K562 (cell line): ENCODE measurements at regions of chr15 and their contacts with region 1.

Region 1: GRCh38 chr15:72147418-72147817 is 29.2 kb downstream of the SENP8 start:
- DNase-seq: no peak
- ATAC-seq: no peak
- H3K4me3 ChIP-seq: no peak overlapping the region
- H3K27ac ChIP-seq: no peak overlapping the region
- H3K4me1 ChIP-seq: no peaks in the 10 kb centered on the region
- H3K27me3 ChIP-seq: peaks cover 0 to 3% of the 10 kb centered on the region in 2 experiments; a peak in 4 of 5 replicates
- CTCF ChIP-seq: no peak
- EP300 ChIP-seq: no peak
- POLR2A ChIP-seq: no peak
- RAD21 ChIP-seq: no peak

Region 2: GRCh38 chr15:71743861-71744382 is 403.5 kb before region 1 on chr15:
- CTCF ChIA-PET with region 1: no interaction called
- POLR2A ChIA-PET with region 1: no interaction called
- in situ Hi-C with region 1: loop called (anchors 5 kb)
- intact Hi-C with region 1: no loop called
- DNase-seq: peak; percentile 45 to 66 (median 56)
- ATAC-seq: peak; percentile 77
- H3K4me3 ChIP-seq: no peak overlapping the region
- H3K27ac ChIP-seq: no peak overlapping the region
- H3K4me1 ChIP-seq: no peaks in the 10 kb centered on the region
- H3K27me3 ChIP-seq: peaks cover 15 to 41% of the 10 kb centered on the region in 2 experiments; a peak in 4 of 5 replicates
- CTCF ChIP-seq: peak; percentile 54 to 74 (median 61); a peak in 5 of 6 replicates
- EP300 ChIP-seq: no peak
- POLR2A ChIP-seq: no peak
- RAD21 ChIP-seq: peak; percentile 29 to 32

Region 3: GRCh38 chr15:71997691-71998090 is 149.7 kb before region 1 on chr15:
- CTCF ChIA-PET with region 1: no interaction called
- POLR2A ChIA-PET with region 1: no interaction called
- in situ Hi-C with region 1: no loop called
- intact Hi-C with region 1: no loop called
- DNase-seq: no peak
- ATAC-seq: no peak
- H3K4me3 ChIP-seq: no peak overlapping the region
- H3K27ac ChIP-seq: no peak overlapping the region
- H3K4me1 ChIP-seq: no peaks in the 10 kb centered on the region
- H3K27me3 ChIP-seq: no peaks in the 10 kb centered on the region
- CTCF ChIP-seq: no peak
- EP300 ChIP-seq: no peak
- POLR2A ChIP-seq: no peak
- RAD21 ChIP-seq: no peak

Region 4: GRCh38 chr15:72199711-72200212 is 52.3 kb after region 1 on chr15:
- CTCF ChIA-PET with region 1: no interaction called
- POLR2A ChIA-PET with region 1: no interaction called
- in situ Hi-C with region 1: no loop called
- intact Hi-C with region 1: no loop called
- DNase-seq: peak; percentile 71 to 75 (median 74)
- ATAC-seq: peak; percentile 90
- H3K4me3 ChIP-seq: no peak overlapping the region
- H3K27ac ChIP-seq: no peak overlapping the region
- H3K4me1 ChIP-seq: peaks cover 5 to 13% of the 10 kb centered on the region in 2 experiments; a peak in 4 of 5 replicates
- H3K27me3 ChIP-seq: no peaks in the 10 kb centered on the region
- CTCF ChIP-seq: peak; percentile 84 to 86 (median 85)
- EP300 ChIP-seq: no peak
- POLR2A ChIP-seq: no peak
- RAD21 ChIP-seq: peak; percentile 57 to 90

Region 5: GRCh38 chr15:72235298-72235697 is 87.9 kb after region 1 on chr15:
- CTCF ChIA-PET with region 1: no interaction called
- POLR2A ChIA-PET with region 1: no interaction called
- in situ Hi-C with region 1: no loop called
- intact Hi-C with region 1: no loop called
- DNase-seq: peak in 1 of 4 experiments; percentile 38
- ATAC-seq: no peak
- H3K4me3 ChIP-seq: no peak overlapping the region
- H3K27ac ChIP-seq: no peak overlapping the region; the same call in 2 of the 3 replicates
- H3K4me1 ChIP-seq: peaks cover 39 to 42% of the 10 kb centered on the region in 2 experiments
- H3K27me3 ChIP-seq: no peaks in the 10 kb centered on the region
- CTCF ChIP-seq: no peak
- EP300 ChIP-seq: no peak
- POLR2A ChIP-seq: no peak
- RAD21 ChIP-seq: no peak